Natural killer cell (primary cell): ENCODE measurements at regions of chr7 and their contacts with region 1.

Region 1: DNA sequence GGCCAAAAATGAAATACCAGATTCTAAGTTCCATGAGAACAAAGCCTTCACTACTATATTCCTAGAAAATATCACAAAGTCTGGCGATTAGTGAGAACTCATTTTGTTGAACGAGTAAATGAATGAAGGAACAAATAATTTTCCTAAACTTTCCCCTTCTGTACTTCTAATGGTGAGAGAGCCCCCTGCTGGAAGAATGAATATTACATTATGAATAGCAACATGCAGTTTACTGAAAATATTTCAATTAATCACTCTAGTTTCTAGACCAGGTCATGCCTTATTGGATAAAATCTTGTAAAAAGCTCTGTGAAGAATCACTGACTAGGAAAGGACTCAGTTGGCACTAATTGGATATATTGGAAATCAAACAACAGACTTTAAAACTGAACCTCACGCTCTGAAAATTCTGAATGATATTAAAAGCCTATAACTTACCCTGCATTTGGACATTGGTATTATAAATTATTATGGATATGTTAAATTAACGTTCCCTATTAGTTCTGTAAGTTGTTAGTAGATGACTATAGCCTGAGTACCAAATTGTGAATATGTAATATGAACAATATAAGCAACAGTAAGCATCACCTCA is 32.4 kb upstream of the MTPN start:
- DNase-seq: peak in 1 of 2 donors; percentile 74
- ATAC-seq: peak in 1 of 3 donors; percentile 36
- H3K4me3 ChIP-seq: no peak overlapping the region
- H3K4me3 Mint-ChIP-seq: no peak overlapping the region
- H3K27ac ChIP-seq: no peak overlapping the region
- H3K27ac Mint-ChIP-seq: no peak overlapping the region
- H3K4me1 ChIP-seq: no peaks in the 10 kb centered on the region
- H3K4me1 Mint-ChIP-seq: peaks cover 15 to 17% of the 10 kb centered on the region in 2 donors
- H3K27me3 ChIP-seq: no peaks in the 10 kb centered on the region
- H3K27me3 Mint-ChIP-seq: peaks cover 15 to 32% of the 10 kb centered on the region in 2 donors
- CTCF ChIP-seq: peak; percentile 93

Region 2: GRCh38 chr7:135801045-135801693 is 208.4 kb before region 1 on chr7:
- intact Hi-C with region 1: loop called (anchors 1 kb)
- DNase-seq: peak in 1 of 2 donors; percentile 79
- ATAC-seq: peak; percentile 74 to 85 (median 77)
- H3K4me3 ChIP-seq: no peak overlapping the region
- H3K4me3 Mint-ChIP-seq: no peak overlapping the region
- H3K27ac ChIP-seq: no peak overlapping the region
- H3K27ac Mint-ChIP-seq: peak overlapping the region in 1 of 2 donors; percentile 29
- H3K4me1 ChIP-seq: peaks cover 7% of the 10 kb centered on the region
- H3K4me1 Mint-ChIP-seq: peaks cover 15 to 17% of the 10 kb centered on the region in 2 donors
- H3K27me3 ChIP-seq: peaks cover 9% of the 10 kb centered on the region
- H3K27me3 Mint-ChIP-seq: peaks cover 17 to 38% of the 10 kb centered on the region in 2 donors
- CTCF ChIP-seq: peak; percentile 92

Region 3: DNA sequence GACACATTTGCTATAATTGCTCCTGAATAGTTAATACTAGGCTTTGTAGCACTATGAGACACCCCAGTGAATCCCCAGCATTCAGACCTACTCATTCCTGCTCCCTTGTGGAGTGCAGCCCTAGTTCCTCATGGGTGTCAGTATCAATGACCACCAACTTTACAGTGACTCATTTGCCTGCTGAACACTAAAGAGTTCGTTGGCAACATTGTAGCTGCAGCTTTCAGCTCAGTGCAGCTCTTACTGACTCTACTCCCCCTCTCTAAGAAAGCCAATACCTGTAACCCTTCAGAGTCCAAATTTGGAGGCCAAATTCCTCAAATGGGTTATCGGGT is 94.7 kb after region 1 on chr7:
- intact Hi-C with region 1: no loop called
- DNase-seq: no peak
- ATAC-seq: no peak
- H3K4me3 ChIP-seq: no peak overlapping the region
- H3K4me3 Mint-ChIP-seq: no peak overlapping the region
- H3K27ac ChIP-seq: no peak overlapping the region
- H3K27ac Mint-ChIP-seq: no peak overlapping the region
- H3K4me1 ChIP-seq: no peaks in the 10 kb centered on the region
- H3K4me1 Mint-ChIP-seq: peaks cover 0 to 9% of the 10 kb centered on the region in 2 donors
- H3K27me3 ChIP-seq: no peaks in the 10 kb centered on the region
- H3K27me3 Mint-ChIP-seq: no peaks in the 10 kb centered on the region
- CTCF ChIP-seq: no peak

Region 4: DNA sequence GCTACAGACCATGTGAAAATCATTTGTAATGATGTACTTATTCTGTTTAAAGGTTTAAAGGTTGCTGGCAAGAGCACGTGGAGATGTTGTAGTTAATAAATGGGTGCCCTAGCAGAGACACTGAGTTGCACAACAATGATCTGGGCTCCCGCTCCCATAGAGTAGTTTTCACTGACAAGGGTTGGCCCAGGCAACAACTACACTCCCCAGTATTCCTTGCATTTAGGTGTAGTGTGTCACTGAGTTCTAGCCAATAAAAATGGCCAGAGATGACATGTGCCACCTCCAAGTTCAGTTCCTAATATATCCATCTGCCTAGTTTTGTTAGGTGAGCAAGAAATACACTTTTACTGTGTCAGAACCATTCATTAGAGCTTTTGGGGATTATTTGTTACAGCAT is 359.6 kb after region 1 on chr7:
- intact Hi-C with region 1: no loop called
- DNase-seq: no peak
- ATAC-seq: no peak
- H3K4me3 ChIP-seq: no peak overlapping the region
- H3K4me3 Mint-ChIP-seq: no peak overlapping the region
- H3K27ac ChIP-seq: no peak overlapping the region
- H3K27ac Mint-ChIP-seq: no peak overlapping the region
- H3K4me1 ChIP-seq: no peaks in the 10 kb centered on the region
- H3K4me1 Mint-ChIP-seq: no peaks in the 10 kb centered on the region
- H3K27me3 ChIP-seq: no peaks in the 10 kb centered on the region
- H3K27me3 Mint-ChIP-seq: no peaks in the 10 kb centered on the region
- CTCF ChIP-seq: no peak